Activated CD4-positive, alpha-beta T cell treated with anti-CD3 and anti-CD28 coated beads, Interleukin-2, amount 10 ng/mL, durations not matched to agents 7 days and 5 days (primary cell): ENCODE measurements at regions of chr15 and their contacts with region 1.

Region 1: GRCh38 chr15:89874926-89875564 is 18.7 kb downstream of the AP3S2 start:
- DNase-seq: peak; percentile 85
- H3K4me3 Mint-ChIP-seq: no peak overlapping the region
- H3K27ac Mint-ChIP-seq: no peak overlapping the region
- H3K4me1 Mint-ChIP-seq: peaks cover 5% of the 10 kb centered on the region
- H3K27me3 Mint-ChIP-seq: no peaks in the 10 kb centered on the region

Region 2: DNA sequence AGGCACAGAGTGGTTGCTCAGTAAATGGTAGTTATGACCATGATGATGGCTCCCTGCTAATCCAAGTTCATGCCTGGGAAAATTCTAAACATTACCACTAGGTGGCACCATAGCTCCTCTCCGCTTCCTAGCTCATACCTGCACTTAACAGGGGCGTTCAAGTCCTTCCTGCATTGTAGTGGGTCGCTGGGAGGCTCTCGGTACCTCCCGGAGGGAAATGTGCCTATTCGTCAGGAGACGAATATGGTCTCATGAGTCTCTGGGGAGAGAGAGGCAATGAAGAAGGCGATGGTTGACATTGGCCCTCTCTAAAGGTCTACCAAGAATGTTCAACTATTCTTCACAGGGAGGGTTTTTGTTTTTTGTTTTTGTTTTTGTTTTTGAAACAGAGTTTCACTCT is 134.9 kb before region 1 on chr15:
- CTCF ChIA-PET with region 1: interaction called, 11 read pairs
- POLR2A ChIA-PET with region 1: no interaction called
- DNase-seq: peak; percentile 74
- H3K4me3 Mint-ChIP-seq: no peak overlapping the region
- H3K27ac Mint-ChIP-seq: no peak overlapping the region
- H3K4me1 Mint-ChIP-seq: peaks cover 1% of the 10 kb centered on the region
- H3K27me3 Mint-ChIP-seq: peaks cover 3% of the 10 kb centered on the region

Region 3: GRCh38 chr15:89888214-89888804 is 13.3 kb after region 1 on chr15:
- CTCF ChIA-PET with region 1: interaction called, 31 read pairs
- POLR2A ChIA-PET with region 1: interaction called, 3 read pairs
- DNase-seq: no peak
- H3K4me3 Mint-ChIP-seq: no peak overlapping the region
- H3K27ac Mint-ChIP-seq: no peak overlapping the region
- H3K4me1 Mint-ChIP-seq: peaks cover 31% of the 10 kb centered on the region
- H3K27me3 Mint-ChIP-seq: no peaks in the 10 kb centered on the region